ENCODE measurements at regions of chr2 and their contacts with region 1.

Region 1: DNA sequence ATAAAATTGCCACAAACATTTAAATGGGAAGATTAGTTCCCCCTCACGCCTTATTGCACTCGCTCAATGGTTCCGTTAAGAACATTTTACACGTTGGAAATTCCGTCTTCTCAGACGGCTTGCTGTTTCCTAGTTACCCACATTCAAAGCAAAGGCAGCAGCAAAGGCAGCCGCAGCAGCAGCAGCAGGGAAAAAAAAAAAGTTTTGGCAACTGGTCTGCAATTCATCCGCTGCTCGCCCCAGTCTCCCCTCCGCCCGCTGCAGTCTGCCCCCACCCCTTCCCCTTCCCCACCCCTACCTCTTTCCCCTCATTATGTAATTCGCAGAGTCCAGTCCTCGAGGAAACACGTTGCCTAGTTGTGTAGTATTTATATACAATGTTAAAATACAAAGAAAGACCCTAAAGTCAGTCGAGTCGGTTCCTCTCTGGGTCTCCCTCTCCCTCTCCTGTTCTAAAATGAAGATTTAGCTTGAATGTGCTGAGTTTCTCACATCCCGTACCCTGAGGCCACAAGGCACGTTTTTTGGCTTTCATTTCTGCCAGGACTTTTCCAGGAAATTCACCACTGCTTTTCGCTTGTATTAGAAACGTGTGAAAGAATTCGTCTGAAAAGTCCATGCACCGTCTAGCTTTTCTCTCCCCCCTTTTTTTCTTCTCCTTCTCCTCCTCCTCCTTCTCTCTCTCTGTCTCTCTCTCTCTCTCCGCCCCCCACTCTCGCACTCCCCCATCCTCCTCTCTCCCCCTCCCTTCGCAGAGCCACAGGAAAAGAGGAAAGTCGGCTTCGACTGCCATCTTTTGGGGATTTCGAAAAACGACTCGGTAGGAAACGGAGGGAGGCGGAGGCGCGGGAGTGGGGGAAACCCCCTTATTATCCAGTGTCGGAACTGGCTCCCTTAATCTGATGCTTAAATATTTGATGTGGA is 140.0 kb downstream of the MEIS1 start:
- DNase-seq: peak in 1 of 2 donors; percentile 83
- H3K4me3 ChIP-seq: peak overlapping the region; percentile 82 to 86
- H3K27ac ChIP-seq: peak overlapping the region; percentile 72 to 77
- H3K4me1 ChIP-seq: peaks cover 15 to 23% of the 10 kb centered on the region in 2 donors
- H3K27me3 ChIP-seq: peaks cover 21% of the 10 kb centered on the region
- CTCF ChIP-seq: peak; percentile 49 to 70 (median 60)

Region 2: DNA sequence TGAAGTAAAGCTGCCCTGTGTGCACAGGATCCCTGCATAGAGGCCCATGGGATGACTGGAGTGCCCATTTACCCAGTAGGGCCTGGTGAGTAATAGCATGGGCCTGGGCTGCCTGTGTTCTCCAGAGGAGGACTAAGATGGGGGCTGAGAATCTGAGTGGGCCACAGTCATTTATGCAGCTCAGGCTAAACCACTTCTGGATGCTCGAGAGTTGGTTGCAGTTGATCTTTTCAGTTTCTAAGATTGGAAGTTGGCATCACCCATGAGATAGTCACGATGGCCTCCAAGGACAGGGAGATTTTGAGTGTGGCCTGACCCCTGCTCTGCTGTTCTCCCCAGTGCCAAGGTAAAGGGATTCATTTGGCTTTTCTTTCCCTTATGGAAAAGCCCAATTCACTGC is 963.5 kb before region 1 on chr2:
- intact Hi-C with region 1: loop called (anchors 10 kb)
- DNase-seq: no peak
- H3K4me3 ChIP-seq: no peak overlapping the region
- H3K27ac ChIP-seq: peak overlapping the region; percentile 42 to 48
- H3K4me1 ChIP-seq: peaks cover 0 to 19% of the 10 kb centered on the region in 2 donors
- H3K27me3 ChIP-seq: no peaks in the 10 kb centered on the region
- CTCF ChIP-seq: no peak

Region 3: DNA sequence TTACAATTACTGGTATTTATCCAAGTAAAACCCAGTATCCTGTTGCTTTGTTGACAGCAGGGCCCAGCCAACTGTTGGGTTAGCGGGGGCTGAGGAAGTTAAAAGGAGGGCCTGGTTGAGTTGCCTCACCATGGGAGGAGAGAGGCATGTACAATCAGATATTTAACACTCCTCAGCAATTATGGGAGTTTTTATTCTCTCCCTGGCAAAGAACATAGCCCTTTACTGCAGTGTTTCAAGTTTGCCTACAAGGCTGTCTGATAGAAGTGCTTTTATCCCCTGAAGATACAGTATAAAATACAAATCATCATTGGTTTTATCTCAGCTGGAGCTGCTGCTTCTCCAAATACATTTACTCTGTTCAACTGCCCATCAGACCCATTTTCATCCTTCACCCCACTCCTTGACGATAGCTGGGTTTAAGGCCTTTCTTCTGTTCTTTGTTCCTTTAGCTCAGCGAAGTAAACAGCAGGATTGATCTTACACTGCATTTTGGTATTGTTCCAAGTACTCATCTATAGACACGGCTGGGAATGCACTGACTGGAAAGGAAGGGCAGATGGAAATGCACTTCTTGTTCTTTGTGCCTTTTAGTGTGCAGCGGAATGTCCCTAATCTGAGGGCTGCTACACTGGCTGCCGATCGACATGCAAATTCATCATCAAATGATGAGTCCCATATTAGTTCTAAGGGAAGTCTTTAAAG is 740.0 kb before region 1 on chr2:
- intact Hi-C with region 1: no loop called
- DNase-seq: no peak
- H3K4me3 ChIP-seq: no peak overlapping the region
- H3K27ac ChIP-seq: no peak overlapping the region
- H3K4me1 ChIP-seq: no peaks in the 10 kb centered on the region
- H3K27me3 ChIP-seq: no peaks in the 10 kb centered on the region
- CTCF ChIP-seq: no peak

Region 4: GRCh38 chr2:66390811-66391210 is 184.2 kb before region 1 on chr2:
- intact Hi-C with region 1: no loop called
- DNase-seq: no peak
- H3K4me3 ChIP-seq: no peak overlapping the region
- H3K27ac ChIP-seq: no peak overlapping the region
- H3K4me1 ChIP-seq: no peaks in the 10 kb centered on the region
- H3K27me3 ChIP-seq: no peaks in the 10 kb centered on the region
- CTCF ChIP-seq: no peak

Region 5: DNA sequence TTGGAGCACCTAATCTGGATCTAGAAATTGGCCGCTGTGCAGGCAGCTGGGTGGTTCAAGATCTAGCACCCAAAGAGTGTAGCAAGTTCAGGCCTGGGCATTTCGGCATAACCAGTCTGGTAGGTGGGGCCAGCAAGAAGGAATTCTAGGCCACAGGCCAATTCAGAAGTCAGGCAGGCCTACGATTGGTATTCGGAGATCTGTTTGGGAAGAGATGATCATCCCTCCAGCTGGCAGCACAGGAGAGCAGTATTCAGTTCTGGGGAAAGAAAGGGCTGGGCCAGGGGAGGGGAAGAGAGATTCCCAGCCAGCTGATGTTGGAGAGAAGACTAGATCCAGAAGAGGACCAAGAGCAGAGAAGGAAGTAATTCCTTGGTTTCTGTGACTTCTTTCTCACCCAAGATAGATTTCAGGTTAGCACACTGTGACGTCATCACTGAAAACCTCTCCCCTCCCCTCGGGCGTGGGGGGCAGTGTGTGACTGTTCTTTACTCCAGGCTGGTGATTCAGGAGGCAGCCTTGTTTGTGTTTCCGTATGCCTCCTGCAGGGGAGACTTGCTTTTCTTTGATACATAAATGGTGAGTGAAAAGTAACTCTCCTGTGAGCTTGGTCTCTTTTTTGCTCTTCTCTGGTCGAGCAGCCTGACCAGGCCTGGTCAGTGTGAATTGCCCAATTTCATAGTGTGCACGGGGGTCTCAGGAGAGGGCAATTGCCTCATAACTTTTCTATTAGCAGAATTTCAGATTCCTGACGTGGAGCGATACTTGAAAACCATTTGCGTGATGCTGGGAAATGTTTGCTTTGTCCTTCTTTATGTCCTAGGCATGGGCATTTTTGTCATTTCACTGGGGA is 78.9 kb before region 1 on chr2:
- intact Hi-C with region 1: loop called (anchors 5 kb)
- DNase-seq: peak; percentile 21 to 89
- H3K4me3 ChIP-seq: peak overlapping the region; percentile 18 to 23
- H3K27ac ChIP-seq: peak overlapping the region; percentile 68 to 70
- H3K4me1 ChIP-seq: peaks cover 11 to 34% of the 10 kb centered on the region in 2 donors
- H3K27me3 ChIP-seq: no peaks in the 10 kb centered on the region
- CTCF ChIP-seq: peak; percentile 26 to 40 (median 27)

Region 6: GRCh38 chr2:67259581-67260342 is 684.8 kb after region 1 on chr2:
- intact Hi-C with region 1: loop called (anchors 5 kb)
- DNase-seq: peak in 1 of 2 donors; percentile 64
- H3K4me3 ChIP-seq: no peak overlapping the region
- H3K27ac ChIP-seq: peak overlapping the region; percentile 83 to 90
- H3K4me1 ChIP-seq: peaks cover 0 to 12% of the 10 kb centered on the region in 2 donors
- H3K27me3 ChIP-seq: no peaks in the 10 kb centered on the region
- CTCF ChIP-seq: no peak

Region 7: DNA sequence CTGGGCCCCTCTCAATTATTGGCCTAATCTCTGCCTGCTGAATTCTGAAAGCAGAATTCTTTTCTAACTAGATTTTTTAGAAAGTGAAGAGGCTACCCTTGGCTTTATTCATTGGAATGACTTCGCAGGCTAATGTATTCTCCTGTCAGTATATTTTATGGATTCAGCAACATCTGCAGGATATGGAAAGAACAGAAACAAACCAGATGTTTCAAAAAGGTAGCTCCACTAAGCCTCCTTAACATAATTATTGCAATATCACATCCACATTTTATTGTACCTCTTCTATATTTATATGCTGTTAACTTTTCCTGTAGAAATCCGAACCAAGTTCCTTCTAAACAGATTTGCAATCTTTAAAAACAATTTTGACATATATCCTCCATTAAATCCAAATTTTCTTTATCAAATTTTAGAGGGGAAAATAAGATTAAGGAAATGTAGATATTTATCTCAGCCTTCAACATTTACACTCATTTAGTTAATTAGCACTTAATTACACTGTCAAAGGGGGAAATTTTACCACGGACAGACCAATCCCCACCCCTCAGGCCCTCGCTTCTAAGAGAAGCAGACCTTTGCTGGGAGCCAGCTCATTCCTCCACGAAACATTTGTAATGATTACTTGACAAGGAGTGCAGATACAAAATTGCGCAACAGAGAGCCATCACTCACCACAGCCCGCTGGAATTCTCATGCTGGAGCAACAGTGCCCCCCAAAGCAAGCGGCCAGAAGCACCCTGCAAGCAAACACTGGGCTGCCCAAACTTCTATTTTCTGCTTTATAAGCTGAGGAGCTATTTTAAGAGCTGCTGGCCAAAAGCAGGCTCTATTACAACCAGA is 1075.5 kb after region 1 on chr2:
- intact Hi-C with region 1: loop called (anchors 5 kb)
- DNase-seq: peak; percentile 31 to 92
- H3K4me3 ChIP-seq: no peak overlapping the region
- H3K27ac ChIP-seq: peak overlapping the region; percentile 23 to 61
- H3K4me1 ChIP-seq: peaks cover 5 to 23% of the 10 kb centered on the region in 2 donors
- H3K27me3 ChIP-seq: no peaks in the 10 kb centered on the region
- CTCF ChIP-seq: peak; percentile 44 to 73 (median 65)

Region 8: DNA sequence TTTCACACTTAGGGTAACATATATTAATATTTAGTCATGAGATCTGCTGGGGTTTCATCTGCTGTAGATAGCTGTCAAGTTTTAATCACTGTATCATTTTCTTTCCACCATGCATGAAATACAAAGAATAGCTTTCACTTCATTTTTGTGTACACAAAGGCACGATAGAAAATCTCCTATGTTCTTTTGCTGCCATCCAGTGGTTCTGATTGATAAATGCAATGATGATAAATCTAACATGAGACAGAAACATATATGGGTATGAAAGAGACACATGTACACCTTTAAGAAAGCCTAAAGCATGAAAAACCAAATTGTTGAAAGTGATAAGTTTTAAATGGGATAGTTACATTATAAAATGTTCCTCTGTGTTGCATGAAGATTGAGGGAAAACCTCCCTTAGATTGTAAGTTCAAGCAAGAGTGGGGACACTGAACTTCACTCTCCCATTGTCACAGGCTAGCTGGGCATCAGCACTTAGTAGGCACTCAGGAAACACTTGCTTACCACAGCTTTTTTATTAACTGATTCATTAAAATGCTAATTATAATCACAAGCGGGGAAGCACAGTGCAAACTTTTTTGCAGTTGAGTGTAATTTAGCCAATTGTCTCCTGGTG is 1456.7 kb after region 1 on chr2:
- intact Hi-C with region 1: loop called (anchors 5 kb)
- DNase-seq: no peak
- H3K4me3 ChIP-seq: no peak overlapping the region
- H3K27ac ChIP-seq: no peak overlapping the region
- H3K4me1 ChIP-seq: peaks cover 0 to 4% of the 10 kb centered on the region in 2 donors
- H3K27me3 ChIP-seq: no peaks in the 10 kb centered on the region
- CTCF ChIP-seq: peak; percentile 56 to 76 (median 74)

Measured in ascending aorta (tissue), 2 donors.